Dorsolateral prefrontal cortex (tissue), 120 donors: ENCODE measurements at regions of chr4 and their contacts with region 1.

Region 1: GRCh38 chr4:157992038-157992705 is 180.7 kb downstream of the GASK1B start:
- DNase-seq: peak in 2 of 10 donors; percentile 21 to 31
- H3K4me3 ChIP-seq: peak overlapping the region in 58 of 59 donors; percentile 3 to 67 (median 46)
- H3K27ac ChIP-seq: peak overlapping the region in 31 of 59 donors; percentile 1 to 75 (median 48)
- H3K27me3 ChIP-seq: no peaks in the 10 kb centered on the region
- CTCF ChIP-seq: peak; percentile 78 to 98 (median 90)

Region 2: GRCh38 chr4:157751631-157752030 is 240.5 kb before region 1 on chr4:
- intact Hi-C with region 1: no loop called
- DNase-seq: no peak
- H3K4me3 ChIP-seq: no peak overlapping the region
- H3K27ac ChIP-seq: no peak overlapping the region
- H3K27me3 ChIP-seq: no peaks in the 10 kb centered on the region
- CTCF ChIP-seq: no peak

Region 3: DNA sequence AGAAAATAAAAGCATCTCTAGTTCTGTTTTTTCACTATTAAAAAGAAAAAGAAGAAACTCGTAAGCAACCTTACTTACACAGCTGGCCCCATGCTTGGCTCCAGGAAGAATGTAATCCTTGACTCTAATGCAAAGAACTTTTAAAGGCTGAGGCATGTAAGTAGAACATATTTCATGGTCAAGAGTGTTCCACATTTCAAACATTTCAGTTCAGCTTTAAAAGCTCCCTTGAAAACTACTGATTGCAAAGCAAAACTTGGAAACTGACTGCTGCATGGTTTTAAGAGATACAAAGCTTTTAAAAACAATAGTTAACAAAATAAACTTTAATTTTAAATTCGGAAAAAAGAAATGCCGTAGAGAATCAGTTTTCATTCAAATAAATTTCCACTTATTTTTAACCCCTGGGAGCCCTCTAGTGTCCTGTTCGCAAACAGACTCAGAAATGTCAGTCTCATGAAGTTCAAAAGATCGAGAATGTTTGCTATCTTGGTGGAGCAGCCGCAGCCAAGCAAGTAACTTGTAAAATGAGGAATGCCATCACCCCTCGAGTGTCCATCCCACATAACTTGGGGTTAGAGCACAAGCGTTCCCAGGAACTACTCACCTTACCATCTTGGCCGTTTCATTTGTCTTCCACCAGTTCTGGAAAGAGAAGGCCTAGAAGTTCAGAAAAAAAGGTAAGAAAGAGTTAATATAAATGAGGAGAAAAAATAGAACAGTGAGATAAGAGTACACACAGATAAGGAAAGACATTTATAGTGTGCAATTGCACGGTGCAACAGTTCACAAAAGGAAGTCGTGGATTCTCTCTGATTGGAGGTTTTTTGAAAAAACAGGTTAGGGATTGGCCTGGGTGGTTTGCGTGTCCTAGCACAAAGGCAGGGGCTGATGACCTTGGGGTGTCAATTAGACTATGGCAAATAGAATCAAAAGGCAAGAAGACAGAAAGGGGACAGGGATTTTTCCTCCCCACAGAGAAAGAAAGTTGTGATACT is 180.4 kb after region 1 on chr4 and contains the start of gene GASK1B:
- intact Hi-C with region 1: loop called (anchors 2 to 5 kb)
- DNase-seq: peak in 2 of 10 donors; percentile 33 to 61
- H3K4me3 ChIP-seq: peak within 1 kb of the TSS; percentile 30 to 70 (median 53)
- H3K27ac ChIP-seq: peak within 1 kb of the TSS in 57 of 59 donors; percentile 6 to 88 (median 76)
- H3K27me3 ChIP-seq: no peaks in the 10 kb centered on the region
- CTCF ChIP-seq: peak; percentile 57 to 94 (median 77)
- total RNA-seq, gene GASK1B: 23.9 to 74.1 (median 43.0) TPM

Region 4: DNA sequence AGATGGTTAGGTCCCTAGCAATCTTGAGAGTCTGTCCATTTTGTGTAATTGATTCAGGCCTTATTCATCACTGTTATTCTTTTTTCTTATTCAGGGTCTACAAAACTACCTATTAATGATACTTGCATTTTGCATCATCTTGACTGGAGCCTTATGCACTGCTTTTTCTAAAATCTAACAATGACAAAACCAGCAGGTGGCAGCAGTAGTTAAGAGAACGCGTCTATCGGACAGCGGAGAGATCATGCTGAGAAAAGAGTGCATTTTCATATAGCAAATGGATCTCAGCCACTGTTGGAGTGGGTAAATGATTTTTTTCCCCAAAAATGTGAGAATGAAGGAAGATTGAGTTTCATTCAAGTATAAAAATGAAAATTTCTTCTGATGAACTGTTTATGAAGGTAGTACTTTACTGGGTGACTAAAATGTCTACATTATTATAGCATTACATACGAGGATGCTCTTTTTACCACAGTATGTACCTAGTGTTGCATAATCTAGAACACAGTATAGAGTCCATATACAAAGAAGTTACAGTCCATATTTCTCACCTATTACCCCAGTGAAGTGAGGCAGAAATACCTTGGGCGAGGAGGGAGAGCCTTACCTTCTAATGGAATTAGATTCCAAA is 261.3 kb after region 1 on chr4:
- intact Hi-C with region 1: loop called in 1 of 2 experiments (anchors 5 kb)
- DNase-seq: peak in 3 of 10 donors; percentile 45 to 69 (median 46)
- H3K4me3 ChIP-seq: peak overlapping the region in 4 of 59 donors; percentile 19 to 38 (median 20)
- H3K27ac ChIP-seq: peak overlapping the region in 58 of 59 donors; percentile 44 to 100 (median 82)
- H3K27me3 ChIP-seq: no peaks in the 10 kb centered on the region
- CTCF ChIP-seq: peak; percentile 42 to 93 (median 78)

Region 5: DNA sequence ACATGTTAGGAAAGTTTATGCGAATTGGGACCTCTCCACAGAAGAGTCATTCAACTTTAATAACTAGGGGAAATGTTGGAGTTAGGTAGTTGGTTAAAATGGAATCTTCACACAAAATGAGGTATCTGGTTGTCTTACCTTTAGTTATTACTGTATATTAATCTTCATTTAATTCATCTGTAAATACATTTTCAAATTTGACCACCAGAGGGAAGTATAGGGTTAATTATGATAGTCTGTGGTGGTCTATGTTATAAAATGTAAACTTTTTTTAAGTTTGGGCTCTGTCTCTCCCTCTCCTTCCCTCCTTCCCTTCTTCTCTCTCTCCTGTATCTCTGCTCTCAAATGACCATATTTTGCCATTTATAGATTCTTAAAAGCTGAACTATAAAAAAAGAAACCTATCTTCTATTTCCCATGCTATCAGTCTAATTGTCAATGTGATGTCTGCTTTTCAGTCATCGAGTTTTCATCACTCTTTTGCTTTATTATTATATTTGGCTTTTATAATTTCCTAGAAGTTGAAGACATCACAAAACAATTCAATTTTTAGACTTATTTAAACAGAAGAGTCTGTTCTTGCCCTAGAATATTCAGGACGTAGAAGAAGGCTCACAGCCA is 267.9 kb after region 1 on chr4:
- intact Hi-C with region 1: loop called in 1 of 2 experiments (anchors 5 kb)
- DNase-seq: no peak
- H3K4me3 ChIP-seq: peak overlapping the region in 4 of 59 donors; percentile 3 to 18 (median 10)
- H3K27ac ChIP-seq: peak overlapping the region in 53 of 59 donors; percentile 3 to 88 (median 73)
- H3K27me3 ChIP-seq: no peaks in the 10 kb centered on the region
- CTCF ChIP-seq: peak in 52 of 56 donors; percentile 27 to 62 (median 46)

Region 6: GRCh38 chr4:158624889-158625478 is 632.8 kb after region 1 on chr4:
- intact Hi-C with region 1: loop called (anchors 10 kb)
- DNase-seq: no peak
- H3K4me3 ChIP-seq: peak overlapping the region in 1 of 59 donors; percentile 21
- H3K27ac ChIP-seq: peak overlapping the region in 29 of 59 donors; percentile 2 to 63 (median 37)
- H3K27me3 ChIP-seq: no peaks in the 10 kb centered on the region
- CTCF ChIP-seq: peak; percentile 56 to 83 (median 71)